Activated CD4-positive, alpha-beta memory T cell treated with anti-CD3 and anti-CD28 coated beads for 36 hours (primary cell): ENCODE measurements at regions of chr15 and their contacts with region 1.

Region 1: DNA sequence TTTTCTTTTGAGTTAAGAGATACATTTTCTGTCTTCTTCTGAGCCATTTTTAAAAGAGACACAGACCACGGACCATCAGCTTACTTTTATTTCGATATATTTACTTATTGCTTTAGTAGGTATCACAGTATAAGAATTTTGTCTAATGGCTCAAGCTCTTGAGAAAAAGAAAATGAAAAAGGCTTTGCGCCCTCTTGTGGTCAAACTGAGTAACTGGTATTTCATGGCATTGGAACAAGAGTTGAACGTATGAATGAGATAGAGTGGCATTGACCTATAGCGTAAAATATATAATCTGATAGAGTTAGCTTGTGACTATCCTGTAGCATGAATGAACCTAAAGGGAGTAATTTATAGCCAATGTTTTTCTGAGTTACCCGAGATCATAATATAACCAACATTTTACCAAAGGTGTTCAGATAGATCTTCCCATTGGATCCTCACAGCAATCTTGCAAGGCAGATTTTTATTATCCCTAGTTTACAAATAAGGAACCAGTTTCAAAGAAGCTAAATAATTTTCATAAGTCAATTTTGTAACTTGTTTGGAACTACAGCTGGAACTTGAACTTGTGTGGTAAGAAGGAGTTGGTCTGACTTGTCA is 154.6 kb downstream of the POLR2M start:
- DNase-seq: peak; percentile 20
- H3K4me3 Mint-ChIP-seq: no peak overlapping the region
- H3K27ac Mint-ChIP-seq: no peak overlapping the region
- H3K4me1 Mint-ChIP-seq: no peaks in the 10 kb centered on the region
- H3K27me3 Mint-ChIP-seq: peaks cover 9% of the 10 kb centered on the region

Region 2: GRCh38 chr15:57599296-57599810 is 261.8 kb before region 1 on chr15:
- CTCF ChIA-PET with region 1: no interaction called
- POLR2A ChIA-PET with region 1: no interaction called
- intact Hi-C with region 1: no loop called
- DNase-seq: no peak
- H3K4me3 Mint-ChIP-seq: no peak overlapping the region
- H3K27ac Mint-ChIP-seq: no peak overlapping the region
- H3K4me1 Mint-ChIP-seq: no peaks in the 10 kb centered on the region
- H3K27me3 Mint-ChIP-seq: peaks cover 6% of the 10 kb centered on the region

Region 3: GRCh38 chr15:57732526-57733331 is 128.4 kb before region 1 on chr15:
- CTCF ChIA-PET with region 1: interaction called, 44 read pairs
- POLR2A ChIA-PET with region 1: no interaction called
- intact Hi-C with region 1: loop called (anchors 1 kb)
- DNase-seq: peak; percentile 52
- H3K4me3 Mint-ChIP-seq: no peak overlapping the region
- H3K27ac Mint-ChIP-seq: no peak overlapping the region
- H3K4me1 Mint-ChIP-seq: peaks cover 8% of the 10 kb centered on the region
- H3K27me3 Mint-ChIP-seq: no peaks in the 10 kb centered on the region

Region 4: DNA sequence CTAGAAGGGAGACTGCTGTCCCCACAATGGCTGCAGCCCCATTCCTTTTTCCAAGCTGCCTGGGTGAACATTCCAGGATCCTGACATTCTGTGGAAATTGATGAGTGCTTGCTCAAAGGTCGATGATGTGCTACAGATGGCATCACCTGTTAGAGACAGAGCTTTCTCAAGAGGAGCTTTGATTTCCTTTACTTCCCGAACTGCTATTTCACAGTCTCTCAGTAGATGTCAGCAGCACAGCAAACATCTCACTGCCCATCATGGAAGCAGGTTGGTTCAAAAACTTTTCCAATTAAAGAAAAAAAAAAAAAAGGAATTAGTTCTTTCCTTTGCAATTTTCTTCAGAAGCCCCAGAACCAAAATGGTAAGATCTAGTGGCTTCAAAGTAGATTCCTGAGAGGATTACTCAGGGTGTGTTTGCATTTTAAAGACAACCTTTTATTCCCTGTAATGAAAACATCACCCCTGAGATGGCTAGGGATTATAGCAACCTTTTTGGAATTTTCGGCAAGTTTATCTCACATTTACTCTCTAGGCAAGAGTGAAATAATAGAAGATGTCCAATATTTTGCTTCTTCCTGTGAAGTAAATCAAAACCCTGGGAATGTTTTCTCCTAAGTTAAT is 109.8 kb before region 1 on chr15:
- CTCF ChIA-PET with region 1: interaction called, 41 read pairs
- POLR2A ChIA-PET with region 1: no interaction called
- intact Hi-C with region 1: loop called (anchors 2 kb)
- DNase-seq: no peak
- H3K4me3 Mint-ChIP-seq: no peak overlapping the region
- H3K27ac Mint-ChIP-seq: no peak overlapping the region
- H3K4me1 Mint-ChIP-seq: no peaks in the 10 kb centered on the region
- H3K27me3 Mint-ChIP-seq: no peaks in the 10 kb centered on the region

Region 5: GRCh38 chr15:57849317-57849716 is 11.8 kb before region 1 on chr15:
- CTCF ChIA-PET with region 1: interaction called, 46 read pairs
- POLR2A ChIA-PET with region 1: no interaction called
- intact Hi-C with region 1: no loop called
- DNase-seq: no peak
- H3K4me3 Mint-ChIP-seq: no peak overlapping the region
- H3K27ac Mint-ChIP-seq: no peak overlapping the region
- H3K4me1 Mint-ChIP-seq: no peaks in the 10 kb centered on the region
- H3K27me3 Mint-ChIP-seq: peaks cover 14% of the 10 kb centered on the region

Region 6: GRCh38 chr15:58070801-58071418 is 209.8 kb after region 1 on chr15:
- CTCF ChIA-PET with region 1: interaction called, 26 read pairs
- POLR2A ChIA-PET with region 1: no interaction called
- intact Hi-C with region 1: loop called (anchors 1 kb)
- DNase-seq: peak; percentile 65
- H3K4me3 Mint-ChIP-seq: no peak overlapping the region
- H3K27ac Mint-ChIP-seq: no peak overlapping the region
- H3K4me1 Mint-ChIP-seq: peaks cover 6% of the 10 kb centered on the region
- H3K27me3 Mint-ChIP-seq: peaks cover 41% of the 10 kb centered on the region